ENCODE measurements at regions of chr12 and their contacts with region 1.

Region 1: GRCh38 chr12:7716381-7716780 is 5.1 kb downstream of the DPPA3 start:
- DNase-seq: no peak
- H3K4me3 ChIP-seq: no peak overlapping the region
- H3K27ac ChIP-seq: no peak overlapping the region
- H3K4me1 ChIP-seq: no peaks in the 10 kb centered on the region
- H3K27me3 ChIP-seq: no peaks in the 10 kb centered on the region
- CTCF ChIP-seq: peak in 1 of 3 experiments; percentile 28

Region 2: GRCh38 chr12:7460375-7461259 is 255.8 kb before region 1 on chr12:
- dilution Hi-C with region 1: no loop called
- DNase-seq: no peak
- H3K4me3 ChIP-seq: no peak overlapping the region
- H3K27ac ChIP-seq: no peak overlapping the region
- H3K4me1 ChIP-seq: no peaks in the 10 kb centered on the region
- H3K27me3 ChIP-seq: no peaks in the 10 kb centered on the region
- CTCF ChIP-seq: peak; percentile 75 to 89 (median 77)

Region 3: DNA sequence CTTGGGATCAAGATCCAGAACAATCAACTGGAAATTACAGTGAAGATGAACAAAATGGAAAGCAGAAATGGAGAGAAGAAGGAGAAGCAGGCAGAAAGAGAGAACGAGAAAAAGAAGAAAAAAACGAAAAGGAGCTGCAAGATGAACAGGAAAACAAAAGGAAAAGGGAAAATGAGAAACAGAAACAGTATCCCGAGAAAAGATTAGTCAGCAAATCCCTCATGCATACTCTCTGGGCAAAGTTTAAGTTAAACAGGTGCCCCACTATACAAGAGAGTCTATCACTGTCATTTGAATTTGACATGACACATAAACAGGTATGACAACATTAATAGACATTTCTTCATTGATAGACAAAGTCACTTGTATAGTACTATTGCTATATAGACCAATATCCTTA is 53.6 kb after region 1 on chr12:
- dilution Hi-C with region 1: no loop called
- DNase-seq: no peak
- H3K4me3 ChIP-seq: no peak overlapping the region
- H3K27ac ChIP-seq: no peak overlapping the region
- H3K4me1 ChIP-seq: no peaks in the 10 kb centered on the region
- H3K27me3 ChIP-seq: no peaks in the 10 kb centered on the region
- CTCF ChIP-seq: no peak

Region 4: GRCh38 chr12:7801460-7801859 is 85.1 kb after region 1 on chr12:
- dilution Hi-C with region 1: loop called (anchors 5 kb)
- DNase-seq: no peak
- H3K4me3 ChIP-seq: no peak overlapping the region
- H3K27ac ChIP-seq: no peak overlapping the region
- H3K4me1 ChIP-seq: peaks cover 9% of the 10 kb centered on the region
- H3K27me3 ChIP-seq: no peaks in the 10 kb centered on the region
- CTCF ChIP-seq: no peak